ENCODE measurements at regions of chr9 and their contacts with region 1.

Region 1: DNA sequence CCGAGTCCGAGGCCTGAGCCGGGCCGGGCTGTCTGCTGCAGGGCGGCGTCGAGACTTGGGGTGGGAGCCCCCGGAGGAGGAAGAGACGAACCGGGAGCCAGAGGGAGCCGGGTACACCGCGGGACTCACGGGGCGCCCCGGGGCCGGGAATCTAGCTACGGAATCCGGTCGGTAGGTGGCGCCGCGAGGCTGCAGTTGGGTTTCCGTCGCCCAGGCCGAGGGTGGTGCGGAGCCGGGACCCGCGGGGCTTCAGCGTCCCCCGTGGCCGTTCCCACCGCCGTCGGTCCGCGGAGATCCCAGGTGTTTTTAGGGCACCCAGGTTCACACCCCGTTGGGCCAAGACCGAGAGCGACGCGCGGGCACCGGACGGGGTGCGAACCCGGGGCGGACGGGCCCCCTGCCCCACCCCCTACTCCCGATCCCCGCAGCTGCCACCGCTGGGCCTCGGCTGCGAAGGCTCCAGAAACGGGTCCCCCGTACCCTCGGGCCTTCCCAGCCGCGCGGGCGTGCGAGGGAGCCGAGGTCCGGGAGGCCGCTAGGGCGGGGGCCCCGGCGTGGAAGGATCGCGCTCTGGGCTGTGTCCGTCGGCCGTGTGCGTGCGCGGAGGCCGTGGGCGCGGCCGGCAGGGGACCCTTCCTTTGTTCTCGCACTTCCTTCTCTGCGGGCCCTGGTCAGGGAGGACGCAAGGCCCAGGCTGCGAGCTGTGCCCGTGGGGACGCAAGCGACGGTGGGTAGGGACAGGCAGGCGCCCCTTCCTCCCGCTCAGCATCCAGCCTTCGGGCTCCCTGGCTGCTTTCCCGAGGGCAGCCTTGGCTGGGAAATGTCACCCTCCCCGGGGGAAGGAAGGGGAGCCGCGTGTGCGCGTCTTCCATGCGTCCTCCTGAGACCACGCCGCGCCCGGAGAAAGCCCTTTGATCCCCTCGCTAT is 146.6 kb downstream of the GAPVD1 start:
- DNase-seq: no peak
- ATAC-seq: peak; percentile 65
- H3K4me3 ChIP-seq: peak overlapping the region; percentile 79 to 81
- H3K27ac ChIP-seq: peak overlapping the region; percentile 82
- H3K4me1 ChIP-seq: peaks cover 17 to 54% of the 10 kb centered on the region in 2 experiments
- H3K27me3 ChIP-seq: no peaks in the 10 kb centered on the region
- CTCF ChIP-seq: peak in 2 of 3 experiments; percentile 80 to 82; a peak in 4 of 6 replicates
- POLR2A ChIP-seq: peak; percentile 21
- RAD21 ChIP-seq: no peak

Region 2: DNA sequence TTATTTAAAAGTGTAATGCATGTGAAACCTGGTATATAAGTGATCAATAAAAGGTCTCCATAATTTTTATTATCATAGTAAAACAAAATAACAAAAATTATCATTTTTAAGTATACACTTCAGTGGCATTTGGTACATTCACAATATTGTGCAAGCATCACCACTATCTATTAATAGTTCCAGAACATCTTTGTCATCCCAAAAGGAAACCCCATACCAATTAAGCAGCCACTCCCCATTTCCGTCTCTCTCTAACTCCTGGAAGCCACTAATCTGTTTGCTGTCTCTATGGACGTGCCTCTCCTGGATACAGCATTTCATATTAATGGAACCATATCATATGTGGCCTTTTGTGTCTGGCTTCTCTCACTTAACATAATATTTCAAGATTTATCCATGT is 623.7 kb before region 1 on chr9:
- CTCF ChIA-PET with region 1: no interaction called
- POLR2A ChIA-PET with region 1: no interaction called
- RAD21 ChIA-PET with region 1: no interaction called
- intact Hi-C with region 1: no loop called
- DNase-seq: no peak
- ATAC-seq: no peak
- H3K4me3 ChIP-seq: no peak overlapping the region
- H3K27ac ChIP-seq: no peak overlapping the region
- H3K4me1 ChIP-seq: peaks cover 3 to 12% of the 10 kb centered on the region in 2 experiments; a peak in 3 of 4 replicates
- H3K27me3 ChIP-seq: no peaks in the 10 kb centered on the region
- CTCF ChIP-seq: no peak
- POLR2A ChIP-seq: no peak
- RAD21 ChIP-seq: no peak

Region 3: GRCh38 chr9:125428060-125428901 is 20.0 kb after region 1 on chr9:
- CTCF ChIA-PET with region 1: interaction called, 12 read pairs
- POLR2A ChIA-PET with region 1: no interaction called
- RAD21 ChIA-PET with region 1: no interaction called
- intact Hi-C with region 1: no loop called
- DNase-seq: peak; percentile 28
- ATAC-seq: peak; percentile 84
- H3K4me3 ChIP-seq: peak overlapping the region; percentile 23 to 51
- H3K27ac ChIP-seq: peak overlapping the region; percentile 37
- H3K4me1 ChIP-seq: peaks cover 7 to 25% of the 10 kb centered on the region in 2 experiments; a peak in 3 of 4 replicates
- H3K27me3 ChIP-seq: no peaks in the 10 kb centered on the region
- CTCF ChIP-seq: peak; percentile 83 to 93 (median 88)
- POLR2A ChIP-seq: no peak
- RAD21 ChIP-seq: peak; percentile 93

Region 4: GRCh38 chr9:125746017-125746773 is 338.0 kb after region 1 on chr9:
- CTCF ChIA-PET with region 1: no interaction called
- POLR2A ChIA-PET with region 1: no interaction called
- RAD21 ChIA-PET with region 1: no interaction called
- intact Hi-C with region 1: loop called (anchors 5 kb)
- DNase-seq: peak; percentile 91
- ATAC-seq: peak; percentile 90
- H3K4me3 ChIP-seq: peak overlapping the region; percentile 22 to 44; a peak in 3 of 4 replicates
- H3K27ac ChIP-seq: peak overlapping the region; percentile 69
- H3K4me1 ChIP-seq: peaks cover 3 to 23% of the 10 kb centered on the region in 2 experiments; a peak in 3 of 4 replicates
- H3K27me3 ChIP-seq: no peaks in the 10 kb centered on the region
- CTCF ChIP-seq: no peak
- POLR2A ChIP-seq: no peak
- RAD21 ChIP-seq: no peak

Region 5: DNA sequence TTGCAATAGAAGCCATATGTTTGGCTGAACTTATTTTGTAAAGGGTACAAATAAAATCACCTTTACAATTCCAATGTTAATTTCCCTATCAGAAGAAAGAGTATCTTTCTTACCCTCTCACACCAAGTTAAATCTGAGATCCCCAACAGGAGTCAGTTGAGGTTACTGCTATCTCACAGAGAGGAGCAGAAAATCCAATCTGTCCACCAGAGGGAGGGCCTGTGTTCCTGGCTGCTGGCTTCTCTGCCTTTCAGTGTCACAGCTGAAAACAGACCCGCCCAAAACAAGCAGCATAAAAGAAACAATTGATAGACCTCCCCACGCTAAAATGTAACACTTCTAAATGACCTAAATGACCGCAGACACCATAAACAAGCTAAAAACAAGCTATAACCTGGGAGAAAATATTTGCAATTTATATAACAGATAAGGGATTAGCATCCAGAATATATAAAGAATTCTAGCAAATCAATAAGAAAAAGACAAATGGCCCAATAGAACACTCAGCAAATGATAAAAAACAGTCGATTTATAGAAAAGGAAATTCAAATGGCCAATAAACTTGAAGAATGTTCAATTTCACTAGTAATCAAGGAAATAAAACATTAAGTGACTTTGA is 893.9 kb after region 1 on chr9:
- CTCF ChIA-PET with region 1: interaction called, 8 read pairs
- POLR2A ChIA-PET with region 1: no interaction called
- RAD21 ChIA-PET with region 1: no interaction called
- intact Hi-C with region 1: loop called (anchors 5 kb)
- DNase-seq: peak; percentile 65
- ATAC-seq: peak; percentile 97
- H3K4me3 ChIP-seq: no peak overlapping the region
- H3K27ac ChIP-seq: no peak overlapping the region
- H3K4me1 ChIP-seq: peaks cover 0 to 8% of the 10 kb centered on the region in 2 experiments; a peak in 3 of 4 replicates
- H3K27me3 ChIP-seq: no peaks in the 10 kb centered on the region
- CTCF ChIP-seq: peak; percentile 86 to 88 (median 87)
- POLR2A ChIP-seq: no peak
- RAD21 ChIP-seq: peak; percentile 75

Region 6: GRCh38 chr9:126490871-126491567 is 1082.8 kb after region 1 on chr9:
- CTCF ChIA-PET with region 1: interaction called, 25 read pairs
- POLR2A ChIA-PET with region 1: no interaction called
- RAD21 ChIA-PET with region 1: interaction called, 3 read pairs
- intact Hi-C with region 1: loop called (anchors 2 kb)
- DNase-seq: no peak
- ATAC-seq: peak; percentile 74
- H3K4me3 ChIP-seq: no peak overlapping the region
- H3K27ac ChIP-seq: no peak overlapping the region
- H3K4me1 ChIP-seq: no peaks in the 10 kb centered on the region
- H3K27me3 ChIP-seq: no peaks in the 10 kb centered on the region
- CTCF ChIP-seq: peak; percentile 77 to 96 (median 88)
- POLR2A ChIP-seq: no peak
- RAD21 ChIP-seq: peak; percentile 94